ENCODE measurements at regions of chr10 and their contacts with region 1.

Region 1: GRCh38 chr10:62268399-62269114 is at the start of gene RTKN2:
- DNase-seq: peak; percentile 64
- ATAC-seq: peak; percentile 91
- H3K4me3 Mint-ChIP-seq: peak within 1 kb of the TSS; percentile 87
- H3K27ac Mint-ChIP-seq: peak within 1 kb of the TSS; percentile 31
- H3K4me1 Mint-ChIP-seq: peaks cover 13% of the 10 kb centered on the region
- H3K27me3 Mint-ChIP-seq: peaks cover 3% of the 10 kb centered on the region
- CTCF ChIP-seq: no peak
- total RNA-seq, gene RTKN2: 0.09 and 0.17 TPM in 2 replicates

Region 2: DNA sequence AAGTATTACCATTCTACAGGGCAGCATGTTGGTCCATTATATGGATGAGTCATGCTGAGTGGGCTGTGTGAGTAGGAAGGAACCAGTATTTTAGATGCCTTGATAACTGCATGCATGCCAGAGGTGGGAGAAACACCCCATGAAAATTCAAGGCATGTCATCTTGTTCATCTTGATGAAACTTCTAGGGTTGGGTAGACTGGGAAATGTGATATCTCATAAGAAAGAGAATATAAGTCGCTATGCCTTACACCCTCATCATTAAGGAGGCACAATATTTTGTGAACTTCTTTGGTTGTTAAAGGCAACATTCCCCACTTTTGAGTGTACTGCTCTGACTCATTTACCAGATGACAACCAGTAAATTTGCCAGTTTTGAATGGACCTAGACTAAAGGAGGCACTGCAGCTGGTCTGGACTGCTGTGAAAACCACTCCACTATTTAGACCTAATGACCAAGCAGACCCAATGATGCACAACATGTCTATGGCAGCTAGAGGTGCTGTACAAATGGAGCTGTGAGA is 153.6 kb after region 1 on chr10:
- CTCF ChIA-PET with region 1: interaction called, 8 read pairs
- POLR2A ChIA-PET with region 1: no interaction called
- intact Hi-C with region 1: loop called (anchors 1 kb)
- DNase-seq: no peak
- ATAC-seq: no peak
- H3K4me3 Mint-ChIP-seq: no peak overlapping the region
- H3K27ac Mint-ChIP-seq: no peak overlapping the region
- H3K4me1 Mint-ChIP-seq: no peaks in the 10 kb centered on the region
- H3K27me3 Mint-ChIP-seq: peaks cover 13% of the 10 kb centered on the region
- CTCF ChIP-seq: no peak

Region 3: GRCh38 chr10:62640411-62640810 is 371.9 kb after region 1 on chr10:
- CTCF ChIA-PET with region 1: no interaction called
- POLR2A ChIA-PET with region 1: no interaction called
- intact Hi-C with region 1: no loop called
- DNase-seq: no peak
- ATAC-seq: no peak
- H3K4me3 Mint-ChIP-seq: no peak overlapping the region
- H3K27ac Mint-ChIP-seq: no peak overlapping the region
- H3K4me1 Mint-ChIP-seq: peaks cover 13% of the 10 kb centered on the region
- H3K27me3 Mint-ChIP-seq: no peaks in the 10 kb centered on the region
- CTCF ChIP-seq: no peak

Region 4: GRCh38 chr10:63083904-63084689 is 815.5 kb after region 1 on chr10:
- CTCF ChIA-PET with region 1: interaction called, 21 read pairs
- POLR2A ChIA-PET with region 1: no interaction called
- intact Hi-C with region 1: loop called (anchors 1 kb)
- DNase-seq: no peak
- ATAC-seq: peak; percentile 77
- H3K4me3 Mint-ChIP-seq: no peak overlapping the region
- H3K27ac Mint-ChIP-seq: no peak overlapping the region
- H3K4me1 Mint-ChIP-seq: no peaks in the 10 kb centered on the region
- H3K27me3 Mint-ChIP-seq: peaks cover 9% of the 10 kb centered on the region
- CTCF ChIP-seq: peak; percentile 53